RWPE1 (cell line): ENCODE measurements at regions of chr1 and their contacts with region 1.

Region 1: DNA sequence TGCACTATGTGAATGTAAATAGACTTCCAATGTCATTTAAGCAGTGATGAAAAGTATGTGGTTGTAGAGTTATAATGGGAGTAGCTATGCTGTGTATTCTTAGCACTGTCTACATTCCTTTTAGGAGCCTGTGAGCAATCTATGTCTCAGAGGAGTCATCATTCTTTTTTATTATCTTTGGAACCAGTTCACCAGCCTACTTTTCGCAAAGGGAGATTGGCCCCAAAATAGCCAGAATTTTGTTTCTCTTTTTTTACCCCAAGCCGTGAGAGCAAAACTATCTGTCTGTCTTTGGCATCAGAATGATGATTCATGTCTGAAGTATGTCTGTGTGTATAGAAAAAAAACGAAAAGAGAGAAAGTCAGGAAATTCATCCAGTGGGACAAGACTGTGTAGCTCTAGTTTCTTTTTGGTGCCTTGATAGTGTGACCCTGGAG is 44.2 kb downstream of the OSBPL9 start:
- DNase-seq: peak; percentile 74
- H3K27ac ChIP-seq: no peak overlapping the region
- CTCF ChIP-seq: no peak

Region 2: GRCh38 chr1:51729156-51729823 is 68.2 kb after region 1 on chr1:
- CTCF ChIA-PET with region 1: no interaction called
- POLR2A ChIA-PET with region 1: no interaction called
- DNase-seq: peak; percentile 98
- H3K27ac ChIP-seq: peak overlapping the region; percentile 80
- CTCF ChIP-seq: no peak

Region 3: GRCh38 chr1:51760872-51761271 is 99.8 kb after region 1 on chr1:
- CTCF ChIA-PET with region 1: interaction called, 10 read pairs
- POLR2A ChIA-PET with region 1: no interaction called
- DNase-seq: peak; percentile 51
- H3K27ac ChIP-seq: no peak overlapping the region
- CTCF ChIP-seq: no peak